Mammary epithelial cell (primary cell): ENCODE measurements at regions of chr17 and their contacts with region 1.

Region 1: DNA sequence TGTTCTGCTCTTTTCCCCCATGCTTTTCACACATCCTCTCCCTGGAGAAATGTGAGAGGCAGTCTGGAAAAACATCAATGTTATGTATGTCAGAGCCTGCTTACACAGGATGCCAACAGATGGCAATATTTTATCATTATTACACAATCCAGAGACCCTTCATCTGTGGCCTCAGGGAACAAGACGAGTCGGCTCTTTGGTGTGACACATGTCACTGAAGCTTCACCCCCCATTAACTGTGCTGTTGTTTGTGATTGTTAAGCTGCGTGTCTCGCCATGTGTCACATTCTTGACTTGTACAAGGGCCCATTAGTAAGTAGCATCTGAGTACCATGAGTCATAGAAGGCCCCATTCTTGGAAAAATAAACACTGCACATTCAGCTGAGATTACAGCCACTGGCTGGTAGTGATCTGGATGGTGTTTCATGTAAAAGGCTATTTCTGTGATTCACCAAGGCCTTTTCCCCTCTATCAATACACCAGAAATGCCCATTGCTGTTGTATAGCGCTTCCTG is 682.1 kb upstream of the SOX9 start:
- DNase-seq: peak; percentile 96
- H3K4me3 ChIP-seq: no peak overlapping the region
- H3K27ac ChIP-seq: peak overlapping the region; percentile 82
- H3K4me1 ChIP-seq: peaks cover 37% of the 10 kb centered on the region
- H3K27me3 ChIP-seq: no peaks in the 10 kb centered on the region
- CTCF ChIP-seq: no peak

Region 2: GRCh38 chr17:71423871-71424546 is 14.7 kb before region 1 on chr17:
- CTCF ChIA-PET with region 1: no interaction called
- dilution Hi-C with region 1: no loop called
- in situ Hi-C with region 1: no loop called
- intact Hi-C with region 1: loop called (anchors 2 kb)
- DNase-seq: peak; percentile 99
- H3K4me3 ChIP-seq: no peak overlapping the region
- H3K27ac ChIP-seq: peak overlapping the region; percentile 96
- H3K4me1 ChIP-seq: peaks cover 31% of the 10 kb centered on the region
- H3K27me3 ChIP-seq: no peaks in the 10 kb centered on the region
- CTCF ChIP-seq: peak in 1 of 2 donors; percentile 38

Region 3: DNA sequence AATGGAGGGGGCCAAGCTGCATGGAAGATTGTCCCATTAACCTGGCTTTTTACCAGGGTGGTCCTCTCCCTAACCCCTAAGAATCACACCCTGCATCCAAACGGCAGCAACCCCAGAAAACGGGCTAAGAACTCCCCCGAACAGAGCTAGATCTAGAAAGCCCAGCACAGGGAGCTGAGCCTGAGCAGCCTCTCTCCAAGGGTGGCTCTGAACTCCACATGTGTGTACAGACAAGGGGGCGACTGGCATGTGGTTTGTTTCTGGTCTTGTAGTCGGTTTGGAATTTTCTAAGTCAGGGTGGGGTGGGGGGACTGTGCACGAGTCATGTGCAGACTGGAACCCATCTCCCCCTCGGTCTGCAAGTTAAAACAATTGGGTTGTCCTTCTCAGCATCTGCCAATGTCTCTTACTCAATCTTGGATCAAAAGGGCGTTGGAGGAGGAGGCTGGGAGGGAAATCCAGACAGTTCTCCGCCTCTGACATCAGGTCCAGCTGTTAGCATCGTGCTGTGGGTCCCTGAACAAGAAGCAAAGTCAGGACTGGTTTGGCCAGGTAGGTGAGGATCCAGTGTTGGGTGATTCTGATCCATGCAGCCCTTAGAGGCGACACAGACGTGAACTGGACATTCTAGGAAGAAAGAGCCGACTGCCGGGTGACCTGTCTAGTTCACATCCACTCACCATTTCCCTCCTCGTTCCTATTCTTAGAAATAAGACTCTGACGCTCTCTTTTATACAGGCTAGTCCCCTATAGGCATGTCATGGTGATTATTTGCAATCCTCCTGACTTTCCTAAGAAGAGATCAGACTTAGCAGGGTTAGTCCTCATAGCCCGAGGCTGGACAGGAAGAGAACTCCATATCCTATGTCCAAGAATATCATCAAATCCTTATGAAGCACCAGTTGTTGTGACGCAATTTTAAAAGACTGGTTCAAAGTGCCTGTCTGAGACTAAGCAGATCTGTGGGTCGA is 1064.0 kb after region 1 on chr17:
- CTCF ChIA-PET with region 1: no interaction called
- dilution Hi-C with region 1: no loop called
- in situ Hi-C with region 1: no loop called
- intact Hi-C with region 1: no loop called
- DNase-seq: no peak
- H3K4me3 ChIP-seq: no peak overlapping the region
- H3K27ac ChIP-seq: no peak overlapping the region
- H3K4me1 ChIP-seq: peaks cover 4% of the 10 kb centered on the region
- H3K27me3 ChIP-seq: no peaks in the 10 kb centered on the region
- CTCF ChIP-seq: no peak